SK-N-SH (cell line): ENCODE measurements at regions of chr2 and their contacts with region 1.

Region 1: GRCh38 chr2:130372055-130372832 is 16.4 kb downstream of the PTPN18 start:
- DNase-seq: peak; percentile 98
- H3K4me3 ChIP-seq: peak overlapping the region; percentile 87 to 99
- H3K27ac ChIP-seq: peak overlapping the region; percentile 52 to 91
- H3K4me1 ChIP-seq: peaks cover 0 to 18% of the 10 kb centered on the region in 2 experiments; a peak in 1 of 4 replicates
- H3K27me3 ChIP-seq: no peaks in the 10 kb centered on the region
- CTCF ChIP-seq: peak; percentile 77
- EP300 ChIP-seq: no peak
- RAD21 ChIP-seq: peak; percentile 51

Region 2: GRCh38 chr2:130355578-130356431 is 16.4 kb before region 1 on chr2 and contains the start of gene PTPN18:
- CTCF ChIA-PET with region 1: interaction called, 26 read pairs
- POLR2A ChIA-PET with region 1: interaction called, 7 read pairs
- DNase-seq: peak; percentile 97
- H3K4me3 ChIP-seq: peak within 1 kb of the TSS; percentile 69 to 78
- H3K27ac ChIP-seq: peak within 1 kb of the TSS in 1 of 2 experiments; percentile 65; a peak in 2 of 4 replicates
- H3K4me1 ChIP-seq: peaks cover 0 to 24% of the 10 kb centered on the region in 2 experiments; a peak in 2 of 4 replicates
- H3K27me3 ChIP-seq: no peaks in the 10 kb centered on the region
- CTCF ChIP-seq: peak; percentile 55
- EP300 ChIP-seq: no peak
- RAD21 ChIP-seq: peak; percentile 53
- polyA plus RNA-seq, gene PTPN18: 30.4 and 31.7 TPM in 2 replicates

Region 3: GRCh38 chr2:130391058-130391871 is 19.0 kb after region 1 on chr2:
- CTCF ChIA-PET with region 1: interaction called, 18 read pairs
- POLR2A ChIA-PET with region 1: interaction called, 6 read pairs
- DNase-seq: peak; percentile 89
- H3K4me3 ChIP-seq: peak overlapping the region; percentile 71 to 73
- H3K27ac ChIP-seq: peak overlapping the region; percentile 72 to 90
- H3K4me1 ChIP-seq: peaks cover 0 to 10% of the 10 kb centered on the region in 2 experiments; a peak in 1 of 4 replicates
- H3K27me3 ChIP-seq: no peaks in the 10 kb centered on the region
- CTCF ChIP-seq: no peak
- EP300 ChIP-seq: no peak
- RAD21 ChIP-seq: no peak